ENCODE measurements at regions of chr4 and their contacts with region 1.

Region 1: GRCh38 chr4:63528256-63528991 is 880.8 kb downstream of the TECRL start:
- DNase-seq: no peak
- H3K4me3 ChIP-seq: no peak overlapping the region
- H3K27ac ChIP-seq: no peak overlapping the region
- H3K4me1 ChIP-seq: no peaks in the 10 kb centered on the region
- H3K27me3 ChIP-seq: no peaks in the 10 kb centered on the region
- CTCF ChIP-seq: no peak; the same call in 1 of the 2 replicates

Region 2: GRCh38 chr4:62849696-62850095 is 678.7 kb before region 1 on chr4:
- CTCF ChIA-PET with region 1: no interaction called
- POLR2A ChIA-PET with region 1: no interaction called
- intact Hi-C with region 1: no loop called
- DNase-seq: no peak
- H3K4me3 ChIP-seq: no peak overlapping the region
- H3K27ac ChIP-seq: no peak overlapping the region
- H3K4me1 ChIP-seq: no peaks in the 10 kb centered on the region
- H3K27me3 ChIP-seq: no peaks in the 10 kb centered on the region
- CTCF ChIP-seq: no peak

Region 3: DNA sequence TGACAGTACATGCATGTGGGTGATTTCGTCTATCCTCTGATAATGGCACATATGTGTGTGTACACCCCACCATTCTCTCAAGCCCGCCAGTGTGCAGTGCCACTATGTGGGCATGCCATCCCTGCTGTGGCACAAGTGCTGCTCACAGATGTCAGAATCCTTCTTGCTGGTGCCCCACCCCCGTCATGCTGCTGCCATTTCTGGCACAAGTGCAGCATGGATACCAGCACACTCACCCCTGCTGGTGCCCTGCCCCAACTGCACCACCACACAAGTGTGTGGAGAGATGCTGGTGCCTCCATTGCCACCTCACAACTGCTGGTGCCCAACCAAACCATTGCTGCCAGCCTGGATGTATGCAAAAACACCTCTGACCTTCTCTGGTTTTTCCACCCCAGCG is 252.9 kb before region 1 on chr4:
- CTCF ChIA-PET with region 1: no interaction called
- POLR2A ChIA-PET with region 1: no interaction called
- intact Hi-C with region 1: no loop called
- DNase-seq: no peak
- H3K4me3 ChIP-seq: no peak overlapping the region
- H3K27ac ChIP-seq: no peak overlapping the region
- H3K4me1 ChIP-seq: no peaks in the 10 kb centered on the region
- H3K27me3 ChIP-seq: no peaks in the 10 kb centered on the region
- CTCF ChIP-seq: no peak

Region 4: DNA sequence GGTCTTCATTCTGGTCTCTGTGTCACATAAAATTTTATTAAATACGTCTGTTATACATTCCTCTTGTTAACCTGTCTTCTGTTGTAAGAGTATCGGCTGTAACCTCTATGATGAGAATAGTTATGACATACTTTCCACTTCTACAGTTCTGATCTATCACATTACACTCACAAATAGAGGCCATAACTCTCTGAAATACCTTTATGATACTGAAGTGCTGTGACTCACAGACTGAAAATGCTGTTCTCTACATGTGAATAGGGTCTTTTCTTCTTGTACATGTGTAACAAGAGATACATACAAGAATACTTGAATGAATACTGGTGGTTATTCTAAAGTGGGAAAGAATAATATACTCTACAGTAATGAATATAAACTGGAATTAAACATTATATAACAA is 166.8 kb before region 1 on chr4:
- CTCF ChIA-PET with region 1: no interaction called
- POLR2A ChIA-PET with region 1: no interaction called
- intact Hi-C with region 1: no loop called
- DNase-seq: no peak
- H3K4me3 ChIP-seq: no peak overlapping the region
- H3K27ac ChIP-seq: no peak overlapping the region
- H3K4me1 ChIP-seq: no peaks in the 10 kb centered on the region
- H3K27me3 ChIP-seq: no peaks in the 10 kb centered on the region
- CTCF ChIP-seq: no peak

Region 5: GRCh38 chr4:63541828-63542227 is 13.4 kb after region 1 on chr4:
- CTCF ChIA-PET with region 1: no interaction called
- POLR2A ChIA-PET with region 1: no interaction called
- intact Hi-C with region 1: no loop called
- DNase-seq: no peak
- H3K4me3 ChIP-seq: no peak overlapping the region
- H3K27ac ChIP-seq: no peak overlapping the region
- H3K4me1 ChIP-seq: no peaks in the 10 kb centered on the region
- H3K27me3 ChIP-seq: no peaks in the 10 kb centered on the region
- CTCF ChIP-seq: no peak

Region 6: DNA sequence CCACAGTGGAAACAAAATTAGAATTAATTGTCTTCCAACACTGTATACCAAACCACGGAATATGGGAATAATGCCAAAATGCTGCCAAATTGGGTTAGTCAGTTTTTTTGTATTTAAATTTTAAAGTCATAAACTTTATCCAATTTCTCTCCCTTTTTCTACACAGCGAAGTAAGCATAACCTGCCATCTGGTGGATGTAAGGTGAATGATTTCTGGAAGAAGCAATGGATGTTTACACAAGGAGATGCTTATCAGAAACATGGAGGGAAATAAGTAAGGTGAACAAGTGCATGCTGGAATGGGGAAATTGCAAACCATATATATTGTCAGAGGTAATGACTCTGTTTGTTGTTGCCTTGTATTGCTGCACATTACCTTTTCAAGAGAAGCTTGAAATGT is 189.0 kb after region 1 on chr4:
- CTCF ChIA-PET with region 1: no interaction called
- POLR2A ChIA-PET with region 1: no interaction called
- intact Hi-C with region 1: loop called (anchors 5 kb)
- DNase-seq: peak; percentile 5 to 36
- H3K4me3 ChIP-seq: no peak overlapping the region
- H3K27ac ChIP-seq: no peak overlapping the region
- H3K4me1 ChIP-seq: no peaks in the 10 kb centered on the region
- H3K27me3 ChIP-seq: no peaks in the 10 kb centered on the region
- CTCF ChIP-seq: peak; percentile 59

Region 7: DNA sequence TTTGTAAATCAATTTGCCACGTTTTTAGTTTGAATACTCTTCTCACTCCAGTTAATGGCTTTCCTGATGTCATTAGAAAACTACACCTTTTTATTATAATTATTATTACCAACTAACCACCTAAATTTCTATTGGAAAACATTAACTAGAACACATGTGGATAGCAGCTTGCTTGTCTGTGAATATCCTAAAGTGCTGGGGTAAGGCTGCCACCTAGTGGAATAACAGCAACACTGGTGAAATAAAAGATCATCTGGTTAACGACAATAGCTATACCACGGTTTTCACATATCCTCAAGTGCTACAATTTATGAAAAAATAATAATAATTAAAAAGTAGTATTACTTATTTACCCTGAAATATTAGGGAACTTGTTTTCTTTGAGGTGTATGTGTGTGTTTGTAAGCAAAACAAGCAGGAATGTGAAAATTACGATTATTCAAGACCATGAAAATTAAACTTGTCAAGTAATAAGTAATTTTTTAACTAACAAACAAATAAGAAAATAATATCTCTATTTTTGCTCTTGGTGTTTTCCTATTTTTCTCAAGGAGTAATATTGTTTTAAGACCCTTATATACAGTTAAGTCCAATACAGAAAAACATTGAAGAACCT is 1010.9 kb after region 1 on chr4:
- CTCF ChIA-PET with region 1: no interaction called
- POLR2A ChIA-PET with region 1: no interaction called
- intact Hi-C with region 1: loop called (anchors 5 kb)
- DNase-seq: peak in 1 of 2 experiments; percentile 13
- H3K4me3 ChIP-seq: no peak overlapping the region
- H3K27ac ChIP-seq: no peak overlapping the region
- H3K4me1 ChIP-seq: no peaks in the 10 kb centered on the region
- H3K27me3 ChIP-seq: no peaks in the 10 kb centered on the region
- CTCF ChIP-seq: peak; percentile 70

Measured in PC-9 (cell line).